Activated CD8-positive, alpha-beta memory T cell treated with anti-CD3 and anti-CD28 coated beads, Interleukin-2, amount 10 ng/mL, durations not matched to agents 7 days and 5 days (primary cell): ENCODE measurements at regions of chr22 and their contacts with region 1.

Region 1: GRCh38 chr22:30649430-30650007 is 13.9 kb downstream of the SLC35E4 start:
- DNase-seq: peak; percentile 90
- ATAC-seq: peak; percentile 100
- H3K4me3 Mint-ChIP-seq: no peak overlapping the region
- H3K27ac Mint-ChIP-seq: peak overlapping the region; percentile 86
- H3K4me1 Mint-ChIP-seq: peaks cover 31% of the 10 kb centered on the region
- H3K27me3 Mint-ChIP-seq: no peaks in the 10 kb centered on the region

Region 2: GRCh38 chr22:30667494-30668385 is 18.2 kb after region 1 on chr22 and contains the start of gene DUSP18:
- CTCF ChIA-PET with region 1: interaction called, 13 read pairs
- DNase-seq: peak; percentile 96
- ATAC-seq: peak; percentile 97
- H3K4me3 Mint-ChIP-seq: peak within 1 kb of the TSS; percentile 98
- H3K27ac Mint-ChIP-seq: peak within 1 kb of the TSS; percentile 86
- H3K4me1 Mint-ChIP-seq: peaks cover 16% of the 10 kb centered on the region
- H3K27me3 Mint-ChIP-seq: peaks cover 4% of the 10 kb centered on the region
- total RNA-seq, gene DUSP18: 9.2 to 11.6 TPM